Cardiac septum (tissue), 1 donor: ENCODE measurements at regions of chr4 and their contacts with region 1.

Region 1: GRCh38 chr4:112231779-112232713 is at the start of gene AP1AR:
- DNase-seq: peak; percentile 89
- total RNA-seq, gene AP1AR: 10.7 TPM

Region 2: DNA sequence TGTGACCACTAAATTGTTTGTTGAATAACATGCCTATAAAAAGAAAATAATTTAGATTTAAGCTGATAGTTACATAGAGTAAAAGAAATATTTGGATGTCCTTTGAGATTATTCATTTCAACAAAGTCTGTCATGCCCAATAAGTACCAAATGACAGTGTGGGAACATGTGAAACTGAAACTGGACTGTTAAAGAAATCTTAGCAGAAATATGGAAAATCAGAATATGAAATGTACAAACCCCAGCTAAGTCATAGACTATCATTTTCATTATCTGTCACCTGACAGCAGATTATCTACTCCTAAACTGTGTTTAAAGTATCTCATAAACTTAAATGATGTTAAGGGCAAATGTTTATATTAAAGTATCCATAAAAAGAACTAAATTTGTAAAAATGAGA is 524.6 kb before region 1 on chr4:
- intact Hi-C with region 1: no loop called
- DNase-seq: no peak

Region 3: GRCh38 chr4:112099701-112100297 is 132.2 kb before region 1 on chr4:
- intact Hi-C with region 1: loop called (anchors 1 kb)
- DNase-seq: no peak

Region 4: GRCh38 chr4:112145326-112145819 is 86.7 kb before region 1 on chr4 and contains the start of gene FAM241A:
- intact Hi-C with region 1: loop called (anchors 2 kb)
- DNase-seq: peak; percentile 94
- total RNA-seq, gene FAM241A: 6.7 TPM

Region 5: GRCh38 chr4:112284662-112285411 is 52.8 kb after region 1 on chr4:
- intact Hi-C with region 1: loop called (anchors 5 kb)
- DNase-seq: no peak

Region 6: GRCh38 chr4:112348488-112349158 is 116.6 kb after region 1 on chr4:
- intact Hi-C with region 1: no loop called
- DNase-seq: peak; percentile 85

Region 7: DNA sequence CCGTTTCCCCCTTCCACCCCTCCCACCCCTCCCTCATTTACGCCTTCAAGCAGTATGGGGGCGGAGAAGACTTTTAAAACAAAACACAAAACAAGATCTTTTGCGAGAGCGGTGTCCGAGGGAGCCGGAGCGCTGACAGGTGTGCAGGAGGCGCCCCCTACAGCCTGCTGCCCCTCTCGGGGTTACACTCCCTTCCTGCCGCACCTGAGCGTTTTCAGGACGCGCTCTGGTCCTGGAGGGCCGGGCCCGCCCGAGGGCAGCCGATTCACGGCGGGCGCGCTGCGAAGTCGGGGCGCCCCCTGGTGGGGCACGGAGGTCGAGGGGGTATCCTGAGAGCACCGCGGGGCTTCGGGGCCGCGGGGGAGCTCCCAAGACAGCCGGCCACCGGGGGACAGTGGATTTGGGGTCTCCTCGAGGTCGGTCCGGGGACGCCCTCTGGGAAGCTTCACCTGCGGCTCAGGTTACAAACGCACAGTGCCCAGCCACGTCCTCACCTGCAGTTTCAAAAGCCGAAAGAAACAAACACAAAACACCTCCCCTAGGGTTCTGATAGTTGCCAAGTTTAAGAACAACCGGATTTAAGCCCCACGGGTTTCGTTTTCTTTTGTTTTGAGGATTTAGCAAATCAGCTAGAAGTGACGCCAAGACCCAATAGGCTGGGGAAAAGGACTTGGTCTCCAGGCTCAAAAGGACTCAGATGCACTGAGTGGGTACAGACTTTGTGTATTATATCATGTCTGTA is 291.9 kb after region 1 on chr4:
- intact Hi-C with region 1: no loop called
- DNase-seq: peak; percentile 81